Right cardiac atrium (tissue), 5 donors: ENCODE measurements at regions of chr3 and their contacts with region 1.

Region 1: GRCh38 chr3:24494618-24495325 is at the start of gene THRB:
- DNase-seq: peak; percentile 82 to 92 (median 91)
- ATAC-seq: peak; percentile 80 to 82
- H3K4me3 ChIP-seq: peak within 1 kb of the TSS; percentile 59
- H3K27ac ChIP-seq: peak within 1 kb of the TSS; percentile 62
- H3K4me1 ChIP-seq: peaks cover 3% of the 10 kb centered on the region
- H3K27me3 ChIP-seq: no peaks in the 10 kb centered on the region
- total RNA-seq, gene THRB: 16.1 to 25.0 (median 21.3) TPM

Region 2: GRCh38 chr3:24264748-24265158 is 230.0 kb before region 1 on chr3:
- intact Hi-C with region 1: loop called (anchors 5 to 10 kb)
- DNase-seq: peak in 1 of 3 donors; percentile 26
- ATAC-seq: peak; percentile 29 to 65
- H3K4me3 ChIP-seq: no peak overlapping the region
- H3K27ac ChIP-seq: no peak overlapping the region
- H3K4me1 ChIP-seq: peaks cover 2% of the 10 kb centered on the region
- H3K27me3 ChIP-seq: no peaks in the 10 kb centered on the region

Region 3: DNA sequence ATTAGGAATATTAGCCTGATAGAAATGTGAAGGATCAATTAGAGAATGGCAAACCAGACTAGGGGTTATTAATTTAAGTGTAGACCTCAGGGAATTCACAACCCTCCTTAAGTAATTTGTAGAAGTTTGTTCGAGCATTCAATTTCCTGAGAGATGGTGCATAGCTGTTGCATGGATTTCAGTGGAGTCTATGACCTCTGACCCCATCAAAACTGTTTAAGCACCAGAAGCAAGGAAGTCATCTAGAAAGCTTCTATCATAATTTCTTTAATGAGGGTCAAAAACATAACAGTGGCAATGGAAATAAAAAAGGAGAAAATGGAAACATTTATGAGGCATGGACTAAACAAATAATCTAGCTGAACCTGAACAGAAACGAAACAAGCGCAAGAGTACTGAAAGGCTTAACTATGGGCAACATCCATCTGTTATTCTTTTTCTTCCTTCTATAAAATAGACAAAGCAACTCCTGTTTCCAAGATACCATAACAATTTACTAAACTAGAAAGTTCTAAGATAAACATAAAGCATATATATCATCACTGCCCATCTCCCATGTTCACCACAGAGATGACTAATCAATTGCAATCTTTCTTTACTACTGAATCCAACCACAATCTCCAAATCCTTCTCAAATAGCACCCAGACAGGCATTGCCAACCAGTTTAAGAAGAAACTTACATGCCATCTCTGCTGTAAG is 151.5 kb before region 1 on chr3:
- intact Hi-C with region 1: no loop called
- DNase-seq: no peak
- ATAC-seq: no peak
- H3K4me3 ChIP-seq: no peak overlapping the region
- H3K27ac ChIP-seq: no peak overlapping the region
- H3K4me1 ChIP-seq: peaks cover 5% of the 10 kb centered on the region
- H3K27me3 ChIP-seq: no peaks in the 10 kb centered on the region

Region 4: DNA sequence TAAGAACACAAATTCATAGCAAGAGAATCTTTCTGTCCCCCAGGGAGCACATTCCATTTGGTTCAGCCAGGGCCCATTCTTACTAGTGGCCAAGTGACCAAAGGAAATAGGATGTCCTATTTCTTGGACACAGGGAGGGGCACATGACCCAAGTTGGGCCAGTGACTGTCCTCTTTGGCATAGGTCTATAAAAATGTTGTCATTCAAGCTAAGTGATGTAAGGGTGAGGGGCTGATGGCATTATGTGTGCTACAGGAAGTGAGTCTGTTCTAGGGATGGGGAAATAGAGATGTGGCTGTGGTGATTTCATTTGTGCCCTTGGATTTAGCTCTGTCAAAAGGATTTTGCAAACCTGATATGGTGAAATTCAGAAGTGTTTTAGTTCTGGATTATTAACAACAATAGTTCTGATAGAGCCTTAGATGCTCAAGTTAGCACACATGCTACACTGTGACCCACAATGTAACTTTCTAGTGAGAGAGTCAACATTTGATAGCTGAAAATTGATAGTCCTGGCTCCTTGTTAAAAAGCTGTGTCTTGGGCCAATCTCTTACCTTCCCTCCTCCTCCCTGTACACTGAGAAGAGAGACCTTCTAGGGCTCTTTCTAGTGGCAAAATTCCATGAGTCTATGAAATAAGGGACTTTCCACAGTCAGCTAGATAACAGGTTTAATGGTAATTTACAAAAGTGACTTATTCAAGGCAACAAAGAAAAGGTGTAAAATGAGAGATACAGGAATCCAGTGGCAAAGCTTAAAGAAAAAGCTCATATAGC is 117.4 kb before region 1 on chr3:
- intact Hi-C with region 1: loop called in 3 of 4 experiments (anchors 10 kb)
- DNase-seq: peak in 1 of 3 donors; percentile 18
- ATAC-seq: peak in 1 of 2 donors; percentile 74
- H3K4me3 ChIP-seq: no peak overlapping the region
- H3K27ac ChIP-seq: no peak overlapping the region
- H3K4me1 ChIP-seq: peaks cover 2% of the 10 kb centered on the region
- H3K27me3 ChIP-seq: no peaks in the 10 kb centered on the region

Region 5: DNA sequence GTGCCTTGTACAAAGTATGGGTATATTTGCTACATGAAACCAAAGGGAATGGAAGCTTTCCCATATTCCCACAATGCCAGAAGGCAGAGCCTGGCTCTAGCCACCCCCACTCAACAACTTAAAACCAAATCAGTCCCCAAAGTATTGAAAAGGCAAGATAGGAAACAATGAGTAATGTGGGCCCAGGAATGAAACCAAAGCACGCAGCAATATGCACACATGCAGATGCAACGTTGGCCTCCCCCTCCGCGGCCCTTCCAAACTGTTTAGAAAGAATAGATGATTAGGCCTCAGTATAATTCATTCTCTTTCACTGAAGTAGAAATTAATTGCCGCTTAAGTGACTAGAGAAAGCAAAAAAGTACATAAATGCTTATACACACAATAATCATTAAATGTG is 59.2 kb before region 1 on chr3:
- intact Hi-C with region 1: loop called in 1 of 4 experiments (anchors 10 kb)
- DNase-seq: peak in 1 of 3 donors; percentile 22
- ATAC-seq: no peak
- H3K4me3 ChIP-seq: no peak overlapping the region
- H3K27ac ChIP-seq: no peak overlapping the region
- H3K4me1 ChIP-seq: peaks cover 7% of the 10 kb centered on the region
- H3K27me3 ChIP-seq: no peaks in the 10 kb centered on the region